Thyroid gland (tissue), 4 donors: ENCODE measurements at regions of chr9 and their contacts with region 1.

Region 1: DNA sequence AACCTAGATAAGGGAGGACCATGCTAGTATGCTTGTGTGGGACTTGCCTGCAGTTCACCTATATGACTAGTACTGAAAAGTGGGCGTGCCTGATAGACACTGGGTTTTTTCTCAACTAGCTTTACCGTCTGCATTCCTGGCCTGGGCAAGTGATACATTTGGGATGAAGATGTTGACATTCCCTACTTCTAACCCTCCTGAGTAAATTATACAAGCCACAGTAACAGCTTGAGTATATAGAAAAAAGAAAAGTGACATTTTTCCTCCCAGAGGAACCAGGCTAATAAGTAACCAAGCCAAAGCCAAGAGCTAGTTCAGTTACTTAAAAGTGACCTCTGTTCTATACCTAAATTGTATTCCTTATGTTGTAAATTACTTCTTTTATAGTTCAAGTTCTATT is 153.8 kb upstream of the CYLC2 start:
- DNase-seq: no peak
- H3K4me3 ChIP-seq: no peak overlapping the region
- H3K27ac ChIP-seq: no peak overlapping the region
- H3K4me1 ChIP-seq: no peaks in the 10 kb centered on the region
- H3K27me3 ChIP-seq: no peaks in the 10 kb centered on the region
- CTCF ChIP-seq: no peak
- POLR2A ChIP-seq: no peak

Region 2: GRCh38 chr9:102700936-102701335 is 140.4 kb before region 1 on chr9:
- intact Hi-C with region 1: no loop called
- DNase-seq: no peak
- H3K4me3 ChIP-seq: no peak overlapping the region
- H3K27ac ChIP-seq: no peak overlapping the region
- H3K4me1 ChIP-seq: no peaks in the 10 kb centered on the region
- H3K27me3 ChIP-seq: no peaks in the 10 kb centered on the region
- CTCF ChIP-seq: no peak
- POLR2A ChIP-seq: no peak

Region 3: GRCh38 chr9:102779356-102779755 is 62.0 kb before region 1 on chr9:
- intact Hi-C with region 1: loop called (anchors 10 kb)
- DNase-seq: no peak
- H3K4me3 ChIP-seq: no peak overlapping the region
- H3K27ac ChIP-seq: no peak overlapping the region
- H3K4me1 ChIP-seq: no peaks in the 10 kb centered on the region
- H3K27me3 ChIP-seq: no peaks in the 10 kb centered on the region
- CTCF ChIP-seq: no peak
- POLR2A ChIP-seq: no peak